Heart right ventricle (tissue), 16 donors: ENCODE measurements at regions of chrX and their contacts with region 1.

Region 1: DNA sequence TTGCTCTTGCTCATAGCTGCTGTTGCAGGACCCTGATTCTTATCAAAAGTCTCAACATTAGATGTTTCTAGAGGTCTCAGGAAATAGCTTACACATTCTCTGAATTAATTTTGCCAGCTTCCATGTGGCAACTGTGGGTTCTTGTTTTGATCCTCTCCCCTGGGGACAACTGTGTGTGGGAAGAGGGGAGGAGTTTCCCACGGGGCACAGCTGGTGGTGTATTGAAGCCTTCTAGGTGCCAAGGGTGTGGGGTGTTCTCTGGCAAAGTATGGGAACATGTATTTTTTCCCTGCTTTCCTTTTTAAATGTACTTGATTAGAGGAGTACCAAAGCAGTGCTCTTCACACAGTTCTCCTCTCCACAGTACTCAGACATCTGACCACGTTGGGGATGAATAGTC is 212.7 kb downstream of the RPA4 start:
- DNase-seq: no peak
- ATAC-seq: no peak
- H3K4me3 ChIP-seq: no peak overlapping the region
- H3K27ac ChIP-seq: no peak overlapping the region
- H3K4me1 ChIP-seq: no peaks in the 10 kb centered on the region
- H3K27me3 ChIP-seq: no peaks in the 10 kb centered on the region
- CTCF ChIP-seq: no peak

Region 2: DNA sequence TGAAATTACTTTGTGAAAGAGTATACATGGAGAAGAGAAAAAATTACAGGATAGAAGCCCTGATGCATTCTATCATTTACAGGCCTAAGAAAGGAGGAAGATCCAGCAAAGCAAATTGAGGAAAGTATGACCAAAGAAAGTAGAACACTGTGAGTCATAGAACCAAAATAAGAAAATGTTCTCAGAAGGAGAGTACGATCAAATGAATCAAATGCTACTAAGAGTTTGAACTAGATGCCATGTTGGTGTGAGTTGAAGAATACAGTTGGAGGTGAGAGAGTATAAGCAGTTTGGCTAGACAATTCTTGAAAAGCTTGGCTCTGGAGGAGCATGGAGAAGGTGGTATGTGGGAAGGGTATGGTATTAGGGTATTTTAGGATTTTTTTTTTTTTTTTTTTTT is 50.9 kb before region 1 on chrX:
- intact Hi-C with region 1: loop called in 1 of 10 experiments (anchors 5 kb)
- DNase-seq: no peak
- ATAC-seq: no peak
- H3K4me3 ChIP-seq: no peak overlapping the region
- H3K27ac ChIP-seq: no peak overlapping the region
- H3K4me1 ChIP-seq: no peaks in the 10 kb centered on the region
- H3K27me3 ChIP-seq: peaks cover 0 to 1% (median 0%) of the 10 kb centered on the region in 7 donors
- CTCF ChIP-seq: no peak